Posterior vena cava (tissue), 2 donors: ENCODE measurements at regions of chr2 and their contacts with region 1.

Region 1: GRCh38 chr2:113370478-113371091 is 66.9 kb upstream of the ZNG1B start:
- DNase-seq: no peak

Region 2: DNA sequence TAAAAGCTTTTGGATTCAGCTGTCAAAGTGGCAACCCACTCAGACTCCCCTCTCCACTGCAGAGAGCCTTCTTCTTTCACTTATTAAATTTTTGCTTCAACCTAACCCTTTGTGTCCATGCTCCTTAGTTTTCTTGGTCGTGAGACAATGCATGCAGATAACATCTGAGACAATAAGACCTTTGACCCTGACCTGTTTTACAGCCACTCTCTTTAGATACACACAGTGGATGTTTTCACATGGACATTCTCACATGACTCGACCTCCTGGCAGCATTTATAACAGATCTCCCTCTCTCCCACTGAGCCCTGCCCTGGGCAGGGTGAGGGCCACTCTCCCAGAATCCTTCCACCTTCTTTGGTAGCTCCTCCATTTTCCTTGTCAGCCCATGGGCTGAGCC is 423.2 kb before region 1 on chr2:
- intact Hi-C with region 1: no loop called
- DNase-seq: no peak

Region 3: GRCh38 chr2:112972423-112973086 is 398.0 kb before region 1 on chr2:
- intact Hi-C with region 1: loop called in 1 of 2 experiments (anchors 5 kb)
- DNase-seq: no peak

Region 4: GRCh38 chr2:113138428-113139322 is 231.9 kb before region 1 on chr2:
- intact Hi-C with region 1: loop called (anchors 5 to 10 kb)
- DNase-seq: no peak

Region 5: GRCh38 chr2:113203901-113204519 is 166.6 kb before region 1 on chr2:
- intact Hi-C with region 1: loop called (anchors 2 to 5 kb)
- DNase-seq: peak; percentile 80

Region 6: DNA sequence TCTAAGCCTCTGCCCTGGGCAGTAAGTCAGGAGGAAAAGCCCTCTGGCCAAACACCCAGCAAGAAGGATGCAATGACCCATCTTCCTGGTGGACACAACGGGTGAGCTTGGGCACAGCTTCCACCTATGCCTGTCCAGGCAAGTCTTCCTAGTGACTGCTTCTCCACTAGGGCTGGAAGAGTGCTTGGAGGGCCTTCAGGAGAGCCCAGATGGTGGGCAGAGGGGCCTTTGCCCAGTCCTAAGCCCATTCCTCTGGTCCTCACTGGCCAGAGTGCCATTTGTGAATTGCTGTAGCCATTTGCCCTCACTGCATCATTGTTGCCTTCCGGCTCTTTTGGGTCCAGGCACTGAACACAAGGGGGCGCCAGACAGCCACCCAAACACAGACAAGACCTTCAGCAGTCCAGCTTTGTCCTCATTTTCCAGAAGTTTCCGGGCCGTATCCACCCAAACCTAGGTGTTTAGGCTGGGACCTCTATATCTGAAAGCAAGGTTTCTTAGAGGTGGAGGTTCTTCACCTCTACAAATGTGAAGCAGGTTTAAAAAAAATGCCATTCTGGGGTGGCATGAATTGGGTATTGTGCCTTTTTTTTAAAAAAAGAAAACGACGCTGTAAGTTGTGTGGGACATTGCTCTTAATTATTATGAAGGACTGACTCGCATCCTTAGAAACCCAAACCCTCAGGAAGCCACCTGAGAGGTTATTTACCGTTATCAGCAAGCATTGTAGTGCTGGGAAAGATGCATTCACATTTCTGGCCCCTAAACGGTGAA is 121.4 kb before region 1 on chr2:
- intact Hi-C with region 1: loop called (anchors 2 to 5 kb)
- DNase-seq: peak; percentile 94

Region 7: DNA sequence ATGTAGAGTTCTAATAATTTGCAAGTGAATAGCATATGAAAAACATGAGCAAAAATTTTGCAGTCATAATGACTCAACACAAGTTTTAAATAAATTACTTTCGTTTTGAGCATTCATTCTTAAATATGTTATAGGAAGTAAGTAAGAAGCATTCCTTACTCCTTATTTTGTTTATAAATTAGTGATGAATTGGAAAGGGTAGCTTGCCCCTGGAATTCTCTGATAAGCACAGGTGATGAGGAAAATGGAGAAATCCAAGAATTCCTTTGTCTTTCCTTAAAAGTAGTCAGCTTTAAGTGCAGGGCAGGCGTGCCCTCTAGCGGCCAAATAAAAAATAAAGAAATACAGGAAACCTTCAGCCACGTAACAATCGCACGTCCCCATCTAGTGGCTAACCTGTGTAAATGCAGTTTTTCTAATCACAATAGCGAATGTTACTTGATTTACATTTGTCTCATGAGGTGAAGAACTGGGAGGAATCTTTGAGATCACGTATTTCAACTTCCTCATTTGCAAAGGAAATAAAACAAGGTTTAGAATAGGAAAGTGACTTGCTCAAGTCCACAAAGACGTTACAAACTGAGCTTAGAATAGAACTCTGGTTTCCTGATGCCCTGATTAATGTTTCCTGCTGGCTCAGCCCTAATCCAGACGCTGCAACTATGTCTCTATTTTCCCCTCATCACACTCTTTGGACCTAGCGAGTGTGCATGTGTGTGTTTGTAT is 19.7 kb after region 1 on chr2:
- intact Hi-C with region 1: no loop called
- DNase-seq: no peak